K562 (cell line): ENCODE measurements at regions of chr1 and their contacts with region 1.

Region 1: GRCh38 chr1:35202048-35202719 is 9.2 kb upstream of the SFPQ start:
- DNase-seq: peak; percentile 61 to 89 (median 72)
- ATAC-seq: peak; percentile 99
- H3K4me3 ChIP-seq: no peak overlapping the region
- H3K27ac ChIP-seq: no peak overlapping the region
- H3K4me1 ChIP-seq: no peaks in the 10 kb centered on the region; a peak in 1 of 5 replicates
- H3K27me3 ChIP-seq: no peaks in the 10 kb centered on the region
- CTCF ChIP-seq: peak; percentile 93 to 94 (median 93)
- EP300 ChIP-seq: no peak
- POLR2A ChIP-seq: no peak
- RAD21 ChIP-seq: peak; percentile 84 to 91

Region 2: DNA sequence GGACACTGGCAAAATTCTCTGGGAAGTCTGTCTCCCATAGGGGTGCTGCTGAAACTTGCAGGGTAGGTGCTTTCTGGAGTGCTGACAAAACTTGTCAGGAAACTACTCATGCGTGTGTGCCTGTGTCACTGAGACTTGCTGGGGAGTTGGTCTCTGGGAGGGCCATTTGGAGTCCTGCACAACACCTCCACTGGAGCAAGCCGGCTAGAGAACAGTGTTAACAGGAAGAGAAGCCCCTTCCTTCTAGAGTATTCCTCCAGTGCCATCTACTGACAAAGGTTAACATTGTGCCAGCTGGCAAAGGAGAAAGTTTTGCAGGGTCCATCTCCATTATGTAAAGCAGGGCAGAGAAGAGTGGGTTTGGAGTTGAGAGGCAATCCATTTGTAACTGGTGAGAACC is 96.3 kb after region 1 on chr1:
- CTCF ChIA-PET with region 1: interaction called, 11 read pairs
- POLR2A ChIA-PET with region 1: no interaction called
- in situ Hi-C with region 1: no loop called
- intact Hi-C with region 1: loop called (anchors 2 kb)
- DNase-seq: peak in 2 of 4 experiments; percentile 29 to 38
- ATAC-seq: peak; percentile 83
- H3K4me3 ChIP-seq: no peak overlapping the region
- H3K27ac ChIP-seq: no peak overlapping the region
- H3K4me1 ChIP-seq: no peaks in the 10 kb centered on the region
- H3K27me3 ChIP-seq: no peaks in the 10 kb centered on the region
- CTCF ChIP-seq: peak; percentile 51 to 70 (median 57)
- EP300 ChIP-seq: no peak
- POLR2A ChIP-seq: no peak
- RAD21 ChIP-seq: peak; percentile 42 to 65; a peak in 3 of 4 replicates

Region 3: DNA sequence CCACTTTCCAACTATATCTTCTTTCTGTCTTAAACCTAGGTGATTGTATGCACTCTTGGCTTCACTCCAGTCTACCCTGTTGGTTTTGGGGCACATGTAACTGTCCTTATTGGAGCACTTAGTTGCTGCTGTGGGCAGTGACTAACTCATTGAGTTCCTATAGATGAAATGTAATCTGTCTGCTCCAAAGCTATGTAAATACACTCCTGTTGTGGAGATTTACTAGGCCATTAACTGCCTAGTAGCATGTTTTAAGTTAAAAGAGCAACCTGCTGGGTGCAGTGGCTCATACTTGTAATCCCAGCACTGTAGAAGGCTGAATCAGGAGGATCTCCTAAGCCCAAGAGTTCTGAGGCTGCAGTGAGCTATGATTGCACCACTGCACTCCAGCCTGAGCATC is 203.9 kb after region 1 on chr1:
- CTCF ChIA-PET with region 1: no interaction called
- POLR2A ChIA-PET with region 1: no interaction called
- in situ Hi-C with region 1: no loop called
- intact Hi-C with region 1: loop called (anchors 10 kb)
- DNase-seq: no peak
- ATAC-seq: no peak
- H3K4me3 ChIP-seq: no peak overlapping the region
- H3K27ac ChIP-seq: no peak overlapping the region
- H3K4me1 ChIP-seq: no peaks in the 10 kb centered on the region
- H3K27me3 ChIP-seq: no peaks in the 10 kb centered on the region
- CTCF ChIP-seq: no peak
- EP300 ChIP-seq: no peak
- POLR2A ChIP-seq: no peak
- RAD21 ChIP-seq: no peak

Region 4: DNA sequence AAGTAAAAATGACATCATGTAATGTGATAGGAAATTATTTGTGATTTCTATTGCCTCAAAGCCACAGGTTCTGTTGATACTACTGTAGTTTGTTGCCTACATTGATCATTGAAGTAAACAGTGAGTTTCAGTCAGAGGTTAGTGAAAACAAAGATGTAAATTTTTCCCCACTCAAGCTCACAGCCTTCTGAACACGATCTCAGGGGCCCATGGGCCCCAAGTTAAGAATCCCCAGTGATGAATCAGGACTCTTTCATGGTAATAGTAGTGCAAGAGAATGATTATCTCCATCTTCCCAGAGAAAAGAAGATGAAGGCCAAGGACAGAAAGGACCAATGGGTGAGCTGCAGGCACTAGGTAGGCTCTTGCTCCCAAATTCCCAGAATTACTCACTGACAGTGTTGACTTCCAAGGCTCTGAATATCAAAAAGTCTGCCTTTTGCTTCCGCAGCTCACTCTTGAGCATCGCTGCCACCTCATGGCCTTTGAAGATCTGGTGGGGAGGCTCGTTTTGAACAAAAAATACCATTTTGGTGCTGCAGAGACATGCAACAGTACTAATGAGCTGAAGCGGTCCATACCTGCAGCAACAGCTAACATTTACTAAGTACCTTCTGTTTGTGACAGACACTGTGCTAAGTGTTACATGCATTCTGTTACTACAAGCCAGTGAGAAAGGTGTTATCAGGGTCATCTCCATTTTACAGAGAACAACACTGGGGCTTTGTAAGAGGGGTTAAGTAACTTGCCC is 241.8 kb after region 1 on chr1:
- CTCF ChIA-PET with region 1: interaction called, 3 read pairs
- POLR2A ChIA-PET with region 1: interaction called, 3 read pairs
- in situ Hi-C with region 1: no loop called
- intact Hi-C with region 1: loop called (anchors 2 kb)
- DNase-seq: peak in 2 of 4 experiments; percentile 30 to 36
- ATAC-seq: peak; percentile 68; the same call in 2 of the 3 replicates
- H3K4me3 ChIP-seq: no peak overlapping the region
- H3K27ac ChIP-seq: no peak overlapping the region
- H3K4me1 ChIP-seq: no peaks in the 10 kb centered on the region
- H3K27me3 ChIP-seq: no peaks in the 10 kb centered on the region
- CTCF ChIP-seq: peak; percentile 43 to 65 (median 63)
- EP300 ChIP-seq: no peak
- POLR2A ChIP-seq: no peak
- RAD21 ChIP-seq: peak; percentile 22 to 72; a peak in 2 of 4 replicates

Region 5: GRCh38 chr1:35564037-35564883 is 362.1 kb after region 1 on chr1:
- CTCF ChIA-PET with region 1: no interaction called
- POLR2A ChIA-PET with region 1: no interaction called
- in situ Hi-C with region 1: loop called (anchors 10 kb)
- intact Hi-C with region 1: loop called (anchors 5 kb)
- DNase-seq: peak; percentile 85 to 92 (median 86)
- ATAC-seq: peak; percentile 88
- H3K4me3 ChIP-seq: no peak overlapping the region
- H3K27ac ChIP-seq: no peak overlapping the region
- H3K4me1 ChIP-seq: peaks cover 0 to 25% of the 10 kb centered on the region in 2 experiments; a peak in 2 of 5 replicates
- H3K27me3 ChIP-seq: no peaks in the 10 kb centered on the region
- CTCF ChIP-seq: peak; percentile 91 to 94 (median 93)
- EP300 ChIP-seq: no peak
- POLR2A ChIP-seq: no peak
- RAD21 ChIP-seq: peak; percentile 59 to 85